ENCODE measurements at regions of chr16 and their contacts with region 1.

Region 1: DNA sequence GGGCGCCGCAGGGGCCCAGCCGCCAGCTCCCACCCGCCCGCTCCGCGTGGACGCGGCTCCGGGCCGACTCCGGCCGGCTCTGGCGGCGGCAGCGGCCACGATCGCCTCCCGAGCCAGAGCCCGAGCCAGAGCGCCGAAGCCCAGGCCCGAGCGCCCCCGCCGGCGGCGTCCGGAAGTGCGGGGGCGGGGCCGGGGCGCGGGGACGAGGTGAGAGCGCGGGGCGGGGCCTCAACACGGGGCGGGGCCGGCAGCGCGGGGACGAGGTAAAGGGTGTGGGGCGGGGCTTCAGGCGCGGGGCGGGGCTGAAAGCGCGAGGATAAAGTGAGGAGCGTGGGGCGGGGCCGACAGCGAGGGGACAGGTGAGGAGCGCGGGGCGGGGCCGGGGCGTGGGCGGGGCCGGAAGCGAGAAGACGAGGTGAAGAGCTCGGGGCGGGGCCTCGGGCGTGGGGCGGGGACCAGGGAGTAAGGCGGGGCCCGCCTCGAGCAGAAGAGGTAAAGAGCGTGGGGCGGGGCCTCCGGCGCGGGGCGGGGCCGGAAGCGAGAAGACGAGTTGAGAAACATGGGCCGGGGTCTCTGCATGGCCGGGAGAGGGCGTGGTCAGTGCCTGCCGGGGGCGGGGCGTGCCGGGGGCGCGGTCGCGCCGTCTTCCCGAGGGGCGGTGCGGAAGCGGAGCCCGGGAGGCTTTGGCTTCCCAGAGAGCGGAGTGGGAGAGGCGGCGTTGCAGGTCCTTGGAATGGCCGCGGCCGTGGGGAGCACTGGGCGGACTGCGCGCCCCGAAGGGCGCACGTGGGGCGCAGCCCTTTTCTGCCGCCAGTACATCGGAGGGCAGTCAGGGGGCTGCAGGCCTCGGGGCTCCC is at the start of gene AXIN1:
- DNase-seq: peak; percentile 97 to 100 (median 99)
- ATAC-seq: peak; percentile 88 to 96 (median 93)
- H3K4me3 ChIP-seq: peak within 1 kb of the TSS; percentile 42 to 84 (median 70)
- H3K27ac ChIP-seq: peak within 1 kb of the TSS in 11 of 12 donors; percentile 33 to 86 (median 61)
- H3K4me1 ChIP-seq: peaks cover 0 to 33% (median 9%) of the 10 kb centered on the region in 12 donors
- H3K27me3 ChIP-seq: no peaks in the 10 kb centered on the region
- CTCF ChIP-seq: peak in 11 of 12 donors; percentile 8 to 66 (median 51)
- POLR2A ChIP-seq: peak in 1 of 2 donors; percentile 79
- total RNA-seq, gene AXIN1: 6.8 to 32.0 (median 11.6) TPM

Region 2: DNA sequence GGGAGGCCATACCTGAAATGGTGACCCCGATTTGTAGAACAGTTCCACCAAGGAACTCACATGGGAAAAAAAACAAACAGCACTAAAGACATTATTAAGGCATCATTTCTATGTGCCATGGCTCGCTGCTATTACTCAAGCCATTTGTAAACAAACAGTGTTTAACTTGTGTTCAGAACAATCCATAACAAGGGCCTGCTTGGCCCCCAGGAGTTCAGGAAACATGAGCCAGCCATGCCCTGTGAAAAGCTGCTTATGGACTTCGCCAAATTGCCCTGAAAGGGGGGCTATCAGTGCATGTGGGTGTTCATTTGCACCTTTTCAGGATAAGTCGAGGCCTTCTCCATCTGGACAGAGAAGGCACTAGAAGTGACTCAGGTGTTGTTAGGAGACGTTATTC is 307.3 kb before region 1 on chr16:
- intact Hi-C with region 1: no loop called
- DNase-seq: peak in 1 of 5 donors; percentile 2
- ATAC-seq: no peak
- H3K4me3 ChIP-seq: no peak overlapping the region
- H3K27ac ChIP-seq: no peak overlapping the region
- H3K4me1 ChIP-seq: no peaks in the 10 kb centered on the region
- H3K27me3 ChIP-seq: no peaks in the 10 kb centered on the region
- CTCF ChIP-seq: no peak
- POLR2A ChIP-seq: no peak

Region 3: DNA sequence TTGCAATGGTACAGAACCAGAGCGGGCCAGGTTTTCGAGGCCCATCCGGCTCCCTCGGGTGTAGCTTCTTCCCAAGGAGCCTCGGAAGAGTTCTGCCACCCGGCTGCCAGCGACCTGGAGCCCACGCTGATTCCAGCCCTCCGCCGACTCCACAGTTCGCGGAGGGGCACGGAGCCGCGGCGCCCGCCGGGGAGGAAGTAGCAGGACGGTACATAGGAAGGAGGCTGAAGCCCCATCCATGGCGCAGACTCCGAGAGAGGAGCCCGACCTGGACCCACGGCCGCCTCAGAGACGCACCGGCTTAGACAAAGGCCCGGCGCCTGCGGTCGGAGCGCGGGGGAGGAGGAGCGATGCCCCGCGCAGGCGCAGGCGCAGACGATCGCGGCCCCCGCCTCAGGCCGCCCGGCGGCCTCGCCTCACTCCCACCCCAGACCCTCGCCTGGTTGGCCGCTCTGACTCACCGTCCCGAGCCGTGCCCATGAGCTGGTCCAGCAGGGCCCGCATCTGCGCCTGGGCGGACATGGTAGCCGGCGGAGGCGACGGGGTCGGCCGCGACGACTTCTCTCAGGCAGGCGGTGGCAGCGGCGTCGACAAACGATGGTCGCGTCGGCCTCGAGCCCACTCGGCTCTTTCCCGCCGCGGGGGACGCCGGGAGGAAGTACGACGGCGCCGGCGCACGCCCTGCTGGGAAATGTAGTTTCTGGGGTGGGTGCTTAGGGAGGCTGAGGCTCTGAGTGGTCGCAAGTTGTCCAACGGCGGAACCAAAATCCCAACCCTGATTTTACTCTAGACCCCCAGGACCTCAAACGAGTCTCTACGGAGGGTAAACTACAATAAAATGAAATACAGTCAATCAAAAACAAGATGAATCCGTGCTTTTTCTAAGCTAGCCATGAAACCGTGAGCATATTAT is 123.7 kb before region 1 on chr16 and contains the start of gene LUC7L:
- intact Hi-C with region 1: loop called in 7 of 10 experiments (anchors 2 to 10 kb)
- DNase-seq: peak; percentile 90 to 94 (median 91)
- ATAC-seq: peak; percentile 90 to 97 (median 96)
- H3K4me3 ChIP-seq: peak within 1 kb of the TSS; percentile 56 to 93 (median 77)
- H3K27ac ChIP-seq: peak within 1 kb of the TSS; percentile 83 to 99 (median 96)
- H3K4me1 ChIP-seq: peaks cover 3 to 27% (median 15%) of the 10 kb centered on the region in 12 donors
- H3K27me3 ChIP-seq: no peaks in the 10 kb centered on the region
- CTCF ChIP-seq: no peak
- POLR2A ChIP-seq: peak; percentile 65 to 93
- total RNA-seq, gene LUC7L: 12.5 to 26.8 (median 19.4) TPM

Region 4: GRCh38 chr16:234468-235305 is 118.1 kb before region 1 on chr16 and contains the start of gene FAM234A:
- intact Hi-C with region 1: loop called in 9 of 10 experiments (anchors 2 to 10 kb)
- DNase-seq: peak; percentile 95 to 96 (median 96)
- ATAC-seq: peak; percentile 86 to 97 (median 96)
- H3K4me3 ChIP-seq: peak within 1 kb of the TSS; percentile 73 to 98 (median 92)
- H3K27ac ChIP-seq: peak within 1 kb of the TSS; percentile 89 to 99 (median 98)
- H3K4me1 ChIP-seq: peaks cover 0 to 26% (median 15%) of the 10 kb centered on the region in 12 donors
- H3K27me3 ChIP-seq: no peaks in the 10 kb centered on the region
- CTCF ChIP-seq: peak in 11 of 12 donors; percentile 4 to 62 (median 43)
- POLR2A ChIP-seq: peak; percentile 85 to 98
- total RNA-seq, gene FAM234A: 132 to 201 (median 148) TPM

Region 5: DNA sequence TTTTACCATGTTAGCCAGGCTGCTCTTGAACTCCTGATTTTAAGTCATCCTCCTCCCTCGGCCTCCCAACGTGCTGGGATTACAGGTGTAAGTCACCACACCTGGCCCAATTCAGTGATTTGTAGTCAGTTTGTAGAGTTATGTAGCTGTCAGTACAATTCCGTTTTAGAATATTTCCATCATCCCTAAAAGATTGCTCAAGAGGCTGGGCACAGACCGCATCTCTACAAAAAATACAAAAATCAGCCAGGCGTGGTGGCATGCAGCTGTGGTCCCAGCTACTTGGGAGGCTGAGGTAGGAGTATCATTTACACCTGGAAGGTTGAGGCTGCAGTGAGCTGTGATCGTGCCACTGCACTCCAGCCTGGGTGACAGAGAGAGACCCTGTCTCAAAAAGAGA is 97.6 kb before region 1 on chr16:
- intact Hi-C with region 1: no loop called
- DNase-seq: no peak
- ATAC-seq: no peak
- H3K4me3 ChIP-seq: no peak overlapping the region
- H3K27ac ChIP-seq: no peak overlapping the region
- H3K4me1 ChIP-seq: peaks cover 0 to 24% (median 4%) of the 10 kb centered on the region in 12 donors
- H3K27me3 ChIP-seq: no peaks in the 10 kb centered on the region
- CTCF ChIP-seq: no peak
- POLR2A ChIP-seq: no peak

Measured in heart left ventricle (tissue), 16 donors.